Sciatic nerve (tissue), 2 donors: ENCODE measurements at regions of chr20 and their contacts with region 1.

Region 1: GRCh38 chr20:8254911-8255582 is 123.0 kb downstream of the PLCB1 start:
- DNase-seq: no peak
- ATAC-seq: no peak

Region 2: DNA sequence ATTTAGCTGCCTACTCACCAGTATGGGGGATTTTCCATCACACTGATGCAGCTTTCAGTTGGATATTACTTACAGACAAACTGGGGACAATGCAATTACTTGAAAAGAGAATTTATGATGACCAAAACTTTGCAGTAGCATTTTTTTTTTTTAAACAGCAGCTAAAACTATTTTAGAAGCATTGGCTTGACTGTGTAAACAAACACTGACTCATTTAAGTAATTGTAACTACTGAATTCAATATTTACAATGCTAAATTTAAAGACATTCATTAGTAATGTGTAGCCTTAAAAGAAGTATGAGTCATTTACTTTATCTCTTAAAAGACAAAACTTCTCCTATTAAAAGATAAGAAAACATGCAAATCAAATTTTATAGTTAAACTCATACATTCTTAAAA is 1836.3 kb before region 1 on chr20:
- intact Hi-C with region 1: no loop called
- DNase-seq: no peak
- ATAC-seq: no peak

Region 3: GRCh38 chr20:8127553-8128255 is 127.3 kb before region 1 on chr20:
- intact Hi-C with region 1: no loop called
- DNase-seq: no peak
- ATAC-seq: no peak

Region 4: DNA sequence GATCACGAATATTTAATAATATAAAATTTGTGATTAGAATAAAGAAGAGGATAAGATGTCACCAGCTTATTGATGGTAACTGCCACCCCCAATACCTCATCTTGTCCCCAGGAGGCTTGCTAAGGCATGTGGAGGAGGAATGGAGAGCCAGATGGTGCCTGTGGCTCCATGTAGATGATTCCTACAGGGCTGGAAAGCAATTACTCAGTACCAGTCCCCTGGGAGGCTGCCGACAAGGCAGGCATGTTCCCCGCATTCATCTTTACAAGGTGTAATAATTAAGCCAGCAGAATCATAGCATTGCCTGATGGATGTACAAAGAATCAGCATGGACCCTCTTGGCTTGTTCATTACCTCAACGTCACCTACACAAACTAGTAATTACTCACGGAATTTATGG is 32.3 kb after region 1 on chr20:
- intact Hi-C with region 1: no loop called
- DNase-seq: no peak
- ATAC-seq: no peak

Region 5: DNA sequence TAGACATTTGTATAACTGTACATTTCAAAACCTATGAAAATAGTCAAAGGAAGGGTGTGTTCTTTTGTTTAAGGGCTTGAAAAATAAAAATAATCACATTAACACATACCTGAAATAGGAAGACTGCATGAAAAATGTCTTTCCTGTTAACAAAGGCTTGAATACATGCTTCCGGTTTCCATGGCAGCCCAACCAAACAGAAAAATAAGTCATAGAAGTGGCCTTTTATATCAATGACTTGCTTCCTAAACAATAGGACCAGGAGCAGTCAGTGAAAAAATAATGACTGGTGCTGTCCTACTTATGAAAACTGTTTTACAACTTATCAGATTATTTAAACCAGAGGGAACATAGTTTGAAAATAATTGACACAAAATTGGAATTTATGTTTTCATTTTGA is 401.3 kb after region 1 on chr20:
- intact Hi-C with region 1: loop called (anchors 5 kb)
- DNase-seq: no peak
- ATAC-seq: no peak